Ovary (tissue), 10 donors: ENCODE measurements at regions of chr11 and their contacts with region 1.

Region 1: GRCh38 chr11:58086528-58086927 is 38.8 kb downstream of the OR9I1 start:
- DNase-seq: no peak
- H3K4me3 ChIP-seq: no peak overlapping the region
- H3K27ac ChIP-seq: no peak overlapping the region
- H3K4me1 ChIP-seq: no peaks in the 10 kb centered on the region
- H3K27me3 ChIP-seq: no peaks in the 10 kb centered on the region
- CTCF ChIP-seq: no peak
- EP300 ChIP-seq: no peak
- POLR2A ChIP-seq: no peak

Region 2: GRCh38 chr11:58125469-58125868 is 38.9 kb after region 1 on chr11 and contains the start of gene OR9I1:
- intact Hi-C with region 1: loop called in 1 of 4 experiments (anchors 1 kb)
- DNase-seq: no peak
- H3K4me3 ChIP-seq: no peak within 1 kb of the TSS
- H3K27ac ChIP-seq: no peak within 1 kb of the TSS
- H3K4me1 ChIP-seq: no peaks in the 10 kb centered on the region
- H3K27me3 ChIP-seq: no peaks in the 10 kb centered on the region
- CTCF ChIP-seq: no peak
- EP300 ChIP-seq: no peak
- POLR2A ChIP-seq: no peak
- total RNA-seq, gene OR9I1: not detected